A549 (cell line): ENCODE measurements at regions of chr19 and their contacts with region 1.

Region 1: DNA sequence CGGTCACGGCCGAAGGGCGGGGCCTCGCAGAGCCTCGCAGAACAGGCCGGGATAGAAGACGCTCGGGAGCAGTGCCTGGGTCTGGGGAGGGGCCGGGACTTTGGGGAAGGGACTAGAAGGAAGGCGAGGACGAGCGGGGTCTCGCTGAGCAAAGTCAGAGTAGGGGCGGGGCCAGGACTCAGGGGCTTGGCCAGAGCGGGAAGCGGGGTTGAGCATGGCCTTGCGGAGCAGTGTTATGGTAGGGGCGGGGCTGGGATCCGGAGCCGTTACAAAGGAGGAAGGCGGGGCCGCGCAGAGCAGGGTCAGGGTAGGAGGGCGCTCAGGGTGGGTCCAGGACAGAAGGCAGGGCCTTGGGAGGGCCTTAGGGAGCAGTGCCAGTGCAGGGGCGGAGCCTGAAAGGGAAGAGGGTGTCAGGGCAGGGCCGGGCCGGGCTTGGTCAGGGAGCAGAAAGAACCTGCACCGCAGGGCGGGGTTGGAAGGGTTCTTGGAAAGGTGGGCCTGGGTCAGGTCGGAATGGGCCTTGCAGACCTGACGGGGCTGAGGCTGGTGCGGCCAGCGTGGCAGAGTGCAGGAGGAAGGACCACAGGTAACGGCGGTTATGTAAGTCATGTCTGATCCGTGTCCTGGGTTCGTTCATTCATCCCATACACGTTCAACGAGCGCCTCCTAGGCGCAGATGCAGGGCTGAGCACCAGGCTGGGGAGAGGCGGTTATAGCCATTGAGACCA is 557 bp upstream of the ATP8B3 start:
- DNase-seq: peak; percentile 88 to 97
- ATAC-seq: peak; percentile 79 to 91
- H3K4me3 ChIP-seq: peak overlapping the region; percentile 81
- H3K27ac ChIP-seq: peak overlapping the region; percentile 92 to 96
- H3K4me1 ChIP-seq: peaks cover 13% of the 10 kb centered on the region
- CTCF ChIP-seq: peak; percentile 63
- EP300 ChIP-seq: no peak
- POLR2A ChIP-seq: no peak; the same call in 1 of the 2 replicates
- RAD21 ChIP-seq: peak; percentile 75 to 78

Region 2: GRCh38 chr19:1825909-1826556 is 13.4 kb after region 1 on chr19:
- CTCF ChIA-PET with region 1: interaction called, 29 read pairs
- POLR2A ChIA-PET with region 1: no interaction called
- DNase-seq: peak; percentile 62 to 88
- ATAC-seq: peak; percentile 85 to 89
- H3K4me3 ChIP-seq: no peak overlapping the region
- H3K27ac ChIP-seq: peak overlapping the region in 1 of 2 experiments; percentile 51; a peak in 2 of 6 replicates
- H3K4me1 ChIP-seq: peaks cover 10% of the 10 kb centered on the region
- CTCF ChIP-seq: peak; percentile 65
- EP300 ChIP-seq: no peak
- POLR2A ChIP-seq: no peak
- RAD21 ChIP-seq: peak; percentile 62 to 68